Heart left ventricle (tissue), 16 donors: ENCODE measurements at regions of chr3 and their contacts with region 1.

Region 1: GRCh38 chr3:143963946-143964345 is 7.7 kb upstream of the DIPK2A start:
- DNase-seq: no peak
- ATAC-seq: no peak
- H3K4me3 ChIP-seq: no peak overlapping the region
- H3K27ac ChIP-seq: no peak overlapping the region
- H3K4me1 ChIP-seq: no peaks in the 10 kb centered on the region
- H3K27me3 ChIP-seq: peaks cover 0 to 3% (median 0%) of the 10 kb centered on the region in 9 donors
- CTCF ChIP-seq: no peak
- POLR2A ChIP-seq: no peak

Region 2: GRCh38 chr3:143119009-143119914 is 844.7 kb before region 1 on chr3 and contains the start of gene CHST2:
- intact Hi-C with region 1: loop called in 1 of 10 experiments (anchors 10 kb)
- DNase-seq: peak; percentile 73 to 87 (median 75)
- ATAC-seq: peak; percentile 66 to 98 (median 94)
- H3K4me3 ChIP-seq: peak within 1 kb of the TSS; percentile 51 to 91 (median 72)
- H3K27ac ChIP-seq: peak within 1 kb of the TSS in 11 of 12 donors; percentile 43 to 82 (median 60)
- H3K4me1 ChIP-seq: peaks cover 0 to 37% (median 2%) of the 10 kb centered on the region in 12 donors
- H3K27me3 ChIP-seq: peaks cover 0 to 33% (median 9%) of the 10 kb centered on the region in 9 donors
- CTCF ChIP-seq: no peak
- POLR2A ChIP-seq: peak in 1 of 2 donors; percentile 51
- total RNA-seq, gene CHST2: 1.3 to 8.7 (median 2.4) TPM

Region 3: DNA sequence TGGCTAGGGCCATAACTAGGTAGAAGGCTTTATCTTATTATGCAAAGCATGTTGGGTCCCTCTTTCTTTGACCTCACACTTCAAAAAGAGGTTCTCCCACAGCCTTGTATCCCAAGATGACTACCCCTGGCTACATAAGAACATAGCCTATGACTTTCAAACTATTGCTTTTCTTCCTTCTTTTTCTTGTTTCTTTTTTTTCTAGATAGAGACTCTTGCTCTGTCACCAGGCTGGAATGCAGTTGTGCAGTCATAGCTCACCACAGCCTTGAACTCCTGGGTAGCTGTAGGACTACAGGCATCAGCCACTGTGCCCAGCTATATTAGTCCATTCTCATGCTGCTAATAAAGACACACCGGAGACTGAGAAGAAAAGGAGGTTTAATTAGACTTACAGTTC is 54.8 kb after region 1 on chr3:
- intact Hi-C with region 1: no loop called
- DNase-seq: no peak
- ATAC-seq: no peak
- H3K4me3 ChIP-seq: no peak overlapping the region
- H3K27ac ChIP-seq: no peak overlapping the region
- H3K4me1 ChIP-seq: no peaks in the 10 kb centered on the region
- H3K27me3 ChIP-seq: no peaks in the 10 kb centered on the region
- CTCF ChIP-seq: no peak
- POLR2A ChIP-seq: no peak

Region 4: GRCh38 chr3:144096016-144096415 is 132.1 kb after region 1 on chr3:
- intact Hi-C with region 1: no loop called
- DNase-seq: no peak
- ATAC-seq: no peak
- H3K4me3 ChIP-seq: no peak overlapping the region
- H3K27ac ChIP-seq: no peak overlapping the region
- H3K4me1 ChIP-seq: no peaks in the 10 kb centered on the region
- H3K27me3 ChIP-seq: no peaks in the 10 kb centered on the region
- CTCF ChIP-seq: no peak
- POLR2A ChIP-seq: no peak